Ovary (tissue), 10 donors: ENCODE measurements at regions of chr3 and their contacts with region 1.

Region 1: GRCh38 chr3:183591881-183592521 is 36.5 kb upstream of the KLHL6 start:
- DNase-seq: no peak
- H3K4me3 ChIP-seq: no peak overlapping the region
- H3K27ac ChIP-seq: no peak overlapping the region
- H3K4me1 ChIP-seq: no peaks in the 10 kb centered on the region
- H3K27me3 ChIP-seq: no peaks in the 10 kb centered on the region
- CTCF ChIP-seq: no peak
- EP300 ChIP-seq: no peak
- POLR2A ChIP-seq: no peak

Region 2: DNA sequence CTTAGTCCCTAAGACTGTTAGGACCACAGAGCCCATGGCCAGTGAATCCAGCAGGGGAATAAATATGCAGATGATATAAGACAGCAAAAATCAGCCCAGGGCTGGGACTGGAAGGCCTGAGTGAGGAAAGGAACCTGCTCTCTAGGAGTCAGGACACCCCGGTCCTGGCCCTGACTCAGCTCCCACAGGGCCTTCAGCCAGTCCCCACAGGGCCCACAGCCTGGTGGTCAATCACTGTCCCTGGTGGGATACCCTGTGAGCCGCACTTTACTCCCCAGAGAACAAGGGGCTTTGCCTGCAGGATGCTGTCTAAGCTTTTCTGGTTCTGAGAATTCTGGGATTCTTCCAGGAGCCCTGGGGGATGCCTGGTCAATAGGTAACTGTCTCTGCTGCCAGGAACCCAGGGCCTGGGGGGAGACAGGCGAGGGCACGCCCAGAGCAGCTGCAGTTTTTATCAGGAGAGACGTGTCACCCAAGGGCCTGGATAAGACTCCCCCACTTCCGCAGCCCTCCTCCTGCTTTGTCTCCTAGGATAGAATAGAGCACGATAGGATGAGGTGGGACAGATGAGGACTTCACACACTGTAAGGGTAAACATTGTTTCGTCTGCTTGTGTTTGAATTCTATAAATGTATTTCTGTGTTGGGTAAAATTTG is 114.1 kb before region 1 on chr3:
- intact Hi-C with region 1: loop called in 1 of 4 experiments (anchors 10 kb)
- DNase-seq: no peak
- H3K4me3 ChIP-seq: no peak overlapping the region
- H3K27ac ChIP-seq: no peak overlapping the region
- H3K4me1 ChIP-seq: no peaks in the 10 kb centered on the region
- H3K27me3 ChIP-seq: no peaks in the 10 kb centered on the region
- CTCF ChIP-seq: no peak
- EP300 ChIP-seq: no peak
- POLR2A ChIP-seq: no peak

Region 3: DNA sequence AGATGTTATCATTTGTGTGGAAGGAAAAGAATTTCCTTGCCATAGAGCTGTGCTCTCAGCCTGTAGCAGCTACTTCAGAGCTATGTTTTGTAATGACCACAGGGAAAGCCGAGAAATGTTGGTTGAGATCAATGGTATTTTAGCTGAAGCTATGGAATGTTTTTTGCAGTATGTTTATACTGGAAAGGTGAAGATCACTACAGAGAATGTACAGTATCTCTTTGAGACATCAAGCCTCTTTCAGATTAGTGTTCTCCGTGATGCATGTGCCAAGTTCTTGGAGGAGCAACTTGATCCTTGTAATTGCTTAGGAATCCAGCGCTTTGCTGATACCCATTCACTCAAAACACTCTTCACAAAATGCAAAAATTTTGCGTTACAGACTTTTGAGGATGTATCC is 58.6 kb after region 1 on chr3:
- intact Hi-C with region 1: no loop called
- DNase-seq: no peak
- H3K4me3 ChIP-seq: no peak overlapping the region
- H3K27ac ChIP-seq: no peak overlapping the region
- H3K4me1 ChIP-seq: peaks cover 2% of the 10 kb centered on the region
- H3K27me3 ChIP-seq: no peaks in the 10 kb centered on the region
- CTCF ChIP-seq: no peak
- EP300 ChIP-seq: no peak
- POLR2A ChIP-seq: no peak